GM10248 (cell line): ENCODE measurements at regions of chr6 and their contacts with region 1.

Region 1: GRCh38 chr6:108835218-108835850 is 12.9 kb upstream of the ARMC2 start:
- DNase-seq: peak; percentile 77
- CTCF ChIP-seq: peak; percentile 84

Region 2: GRCh38 chr6:108848116-108848868 is 13.0 kb after region 1 on chr6 and contains the start of gene ARMC2:
- CTCF ChIA-PET with region 1: interaction called, 17 read pairs
- POLR2A ChIA-PET with region 1: no interaction called
- DNase-seq: peak; percentile 92
- CTCF ChIP-seq: no peak